ENCODE measurements at regions of chr12 and their contacts with region 1.

Region 1: GRCh38 chr12:124767066-124767821 is 96.4 kb downstream of the SCARB1 start:
- DNase-seq: peak; percentile 66 to 89 (median 82)
- ATAC-seq: peak; percentile 93
- H3K4me3 ChIP-seq: no peak overlapping the region
- H3K4me3 Mint-ChIP-seq: peak overlapping the region in 1 of 10 donors; percentile 20
- H3K27ac ChIP-seq: no peak overlapping the region
- H3K27ac Mint-ChIP-seq: peak overlapping the region in 6 of 9 donors; percentile 9 to 81 (median 30)
- H3K4me1 ChIP-seq: peaks cover 5% of the 10 kb centered on the region in 2 donors
- H3K4me1 Mint-ChIP-seq: peaks cover 10 to 20% (median 13%) of the 10 kb centered on the region in 7 donors
- H3K27me3 ChIP-seq: no peaks in the 10 kb centered on the region
- H3K27me3 Mint-ChIP-seq: peaks cover 4 to 20% (median 6%) of the 10 kb centered on the region in 5 donors

Region 2: GRCh38 chr12:123905319-123905925 is 861.8 kb before region 1 on chr12:
- CTCF ChIA-PET with region 1: no interaction called
- POLR2A ChIA-PET with region 1: no interaction called
- intact Hi-C with region 1: loop called in 1 of 2 experiments (anchors 5 kb)
- DNase-seq: peak; percentile 38 to 78 (median 66)
- ATAC-seq: peak; percentile 76
- H3K4me3 ChIP-seq: no peak overlapping the region
- H3K4me3 Mint-ChIP-seq: no peak overlapping the region
- H3K27ac ChIP-seq: no peak overlapping the region
- H3K27ac Mint-ChIP-seq: peak overlapping the region in 1 of 9 donors; percentile 42
- H3K4me1 ChIP-seq: no peaks in the 10 kb centered on the region
- H3K4me1 Mint-ChIP-seq: peaks cover 7 to 17% (median 15%) of the 10 kb centered on the region in 7 donors
- H3K27me3 ChIP-seq: no peaks in the 10 kb centered on the region
- H3K27me3 Mint-ChIP-seq: peaks cover 0 to 17% (median 3%) of the 10 kb centered on the region in 5 donors

Region 3: DNA sequence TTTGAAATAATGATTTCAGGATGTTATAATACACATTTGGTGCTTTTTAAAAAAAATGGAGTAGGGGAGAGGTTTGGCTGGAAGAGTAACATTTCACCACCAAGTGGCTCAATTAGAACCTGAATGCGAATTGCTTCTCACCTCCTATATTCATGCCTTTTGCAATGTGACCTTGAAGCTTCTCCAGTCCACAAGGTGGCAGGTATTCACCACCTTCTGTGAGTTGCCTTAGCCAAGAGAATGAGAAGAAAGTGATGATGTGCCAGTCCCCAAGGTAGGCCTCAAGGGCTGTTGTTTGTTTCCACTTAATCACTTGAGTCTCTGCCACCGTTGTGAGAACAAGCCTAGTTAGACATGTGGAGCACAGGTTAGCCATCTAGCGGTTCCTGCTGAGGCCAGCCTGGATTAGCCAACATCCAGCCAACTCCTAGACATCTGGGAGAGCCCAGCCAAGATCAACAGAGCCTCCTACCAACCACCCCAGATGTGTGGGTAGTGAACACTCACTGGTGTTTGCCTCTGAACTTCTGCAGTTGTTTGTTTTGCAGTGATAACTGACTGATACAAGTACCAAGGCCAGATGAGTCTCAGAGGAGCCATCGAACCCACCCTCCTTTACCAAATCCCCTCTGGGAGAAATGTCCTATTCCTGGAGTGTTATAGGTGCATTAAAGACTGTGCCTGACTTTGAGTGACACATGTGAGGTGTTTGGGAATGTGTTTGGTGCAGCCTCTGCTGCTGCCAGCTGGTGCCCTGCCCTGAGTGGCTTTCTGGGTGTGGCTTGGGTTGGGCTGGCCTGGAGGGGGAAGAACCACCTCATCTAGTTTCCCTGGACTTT is 604.9 kb before region 1 on chr12:
- CTCF ChIA-PET with region 1: no interaction called
- POLR2A ChIA-PET with region 1: no interaction called
- intact Hi-C with region 1: loop called (anchors 5 to 10 kb)
- DNase-seq: peak in 1 of 9 donors; percentile 1
- ATAC-seq: no peak
- H3K4me3 ChIP-seq: no peak overlapping the region
- H3K4me3 Mint-ChIP-seq: no peak overlapping the region
- H3K27ac ChIP-seq: no peak overlapping the region
- H3K27ac Mint-ChIP-seq: no peak overlapping the region
- H3K4me1 ChIP-seq: no peaks in the 10 kb centered on the region
- H3K4me1 Mint-ChIP-seq: no peaks in the 10 kb centered on the region
- H3K27me3 ChIP-seq: no peaks in the 10 kb centered on the region
- H3K27me3 Mint-ChIP-seq: peaks cover 0 to 2% (median 0%) of the 10 kb centered on the region in 5 donors

Region 4: GRCh38 chr12:124453419-124454351 is 313.6 kb before region 1 on chr12:
- CTCF ChIA-PET with region 1: interaction called, 3 read pairs
- POLR2A ChIA-PET with region 1: no interaction called
- intact Hi-C with region 1: loop called (anchors 5 to 10 kb)
- DNase-seq: peak; percentile 47 to 82 (median 61)
- ATAC-seq: peak; percentile 78
- H3K4me3 ChIP-seq: peak overlapping the region; percentile 58
- H3K4me3 Mint-ChIP-seq: peak overlapping the region; percentile 42 to 77 (median 66)
- H3K27ac ChIP-seq: peak overlapping the region; percentile 48
- H3K27ac Mint-ChIP-seq: peak overlapping the region; percentile 10 to 87 (median 63)
- H3K4me1 ChIP-seq: peaks cover 51 to 74% of the 10 kb centered on the region in 2 donors
- H3K4me1 Mint-ChIP-seq: peaks cover 23 to 74% (median 55%) of the 10 kb centered on the region in 7 donors
- H3K27me3 ChIP-seq: no peaks in the 10 kb centered on the region
- H3K27me3 Mint-ChIP-seq: no peaks in the 10 kb centered on the region

Region 5: GRCh38 chr12:124713436-124714082 is 53.7 kb before region 1 on chr12:
- CTCF ChIA-PET with region 1: no interaction called
- POLR2A ChIA-PET with region 1: no interaction called
- intact Hi-C with region 1: loop called in 1 of 2 experiments (anchors 5 kb)
- DNase-seq: peak in 8 of 9 donors; percentile 46 to 74 (median 63)
- ATAC-seq: peak; percentile 77
- H3K4me3 ChIP-seq: peak overlapping the region; percentile 56
- H3K4me3 Mint-ChIP-seq: peak overlapping the region; percentile 72 to 87 (median 82)
- H3K27ac ChIP-seq: no peak overlapping the region
- H3K27ac Mint-ChIP-seq: peak overlapping the region; percentile 72 to 93 (median 88)
- H3K4me1 ChIP-seq: peaks cover 12 to 14% of the 10 kb centered on the region in 2 donors
- H3K4me1 Mint-ChIP-seq: peaks cover 16 to 26% (median 19%) of the 10 kb centered on the region in 7 donors
- H3K27me3 ChIP-seq: no peaks in the 10 kb centered on the region
- H3K27me3 Mint-ChIP-seq: peaks cover 0 to 15% (median 0%) of the 10 kb centered on the region in 5 donors

Region 6: GRCh38 chr12:124906606-124907261 is 139.5 kb after region 1 on chr12:
- CTCF ChIA-PET with region 1: no interaction called
- POLR2A ChIA-PET with region 1: no interaction called
- intact Hi-C with region 1: loop called in 1 of 2 experiments (anchors 5 kb)
- DNase-seq: peak; percentile 49 to 92 (median 89)
- ATAC-seq: peak; percentile 90
- H3K4me3 ChIP-seq: no peak overlapping the region
- H3K4me3 Mint-ChIP-seq: peak overlapping the region in 1 of 10 donors; percentile 4
- H3K27ac ChIP-seq: no peak overlapping the region
- H3K27ac Mint-ChIP-seq: peak overlapping the region in 8 of 9 donors; percentile 1 to 67 (median 36)
- H3K4me1 ChIP-seq: peaks cover 4 to 10% of the 10 kb centered on the region in 2 donors
- H3K4me1 Mint-ChIP-seq: peaks cover 21 to 33% (median 27%) of the 10 kb centered on the region in 7 donors
- H3K27me3 ChIP-seq: no peaks in the 10 kb centered on the region
- H3K27me3 Mint-ChIP-seq: no peaks in the 10 kb centered on the region